Calu3 (cell line): ENCODE measurements at regions of chr10 and their contacts with region 1.

Region 1: DNA sequence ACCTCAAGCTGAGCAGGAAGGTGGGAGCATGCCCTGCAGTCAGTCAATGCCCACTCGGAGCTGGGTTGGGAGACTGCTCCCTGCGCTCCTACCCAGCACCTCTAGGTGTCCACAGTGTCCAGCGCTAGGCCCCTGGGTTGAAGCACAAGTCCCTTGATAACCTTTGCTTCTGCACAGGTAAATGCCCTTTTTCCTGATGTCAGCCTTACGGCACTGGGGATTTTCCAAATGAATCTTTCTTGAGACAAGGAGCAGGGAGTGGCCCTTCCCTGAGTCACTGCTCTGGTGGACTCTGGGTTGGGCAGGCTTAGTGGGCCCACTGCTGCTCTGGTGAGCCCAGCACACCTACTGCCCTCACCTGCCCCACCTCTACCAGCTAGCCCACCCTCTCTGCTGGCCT is 61.9 kb upstream of the OPN4 start:
- DNase-seq: peak; percentile 38
- H3K4me3 Mint-ChIP-seq: no peak overlapping the region
- H3K27ac Mint-ChIP-seq: no peak overlapping the region
- H3K4me1 Mint-ChIP-seq: peaks cover 9% of the 10 kb centered on the region
- H3K27me3 Mint-ChIP-seq: no peaks in the 10 kb centered on the region
- CTCF ChIP-seq: no peak

Region 2: GRCh38 chr10:86603256-86603655 is 10.8 kb after region 1 on chr10:
- CTCF ChIA-PET with region 1: no interaction called
- intact Hi-C with region 1: no loop called
- DNase-seq: no peak
- H3K4me3 Mint-ChIP-seq: no peak overlapping the region
- H3K27ac Mint-ChIP-seq: no peak overlapping the region
- H3K4me1 Mint-ChIP-seq: peaks cover 15% of the 10 kb centered on the region
- H3K27me3 Mint-ChIP-seq: peaks cover 14% of the 10 kb centered on the region
- CTCF ChIP-seq: no peak

Region 3: DNA sequence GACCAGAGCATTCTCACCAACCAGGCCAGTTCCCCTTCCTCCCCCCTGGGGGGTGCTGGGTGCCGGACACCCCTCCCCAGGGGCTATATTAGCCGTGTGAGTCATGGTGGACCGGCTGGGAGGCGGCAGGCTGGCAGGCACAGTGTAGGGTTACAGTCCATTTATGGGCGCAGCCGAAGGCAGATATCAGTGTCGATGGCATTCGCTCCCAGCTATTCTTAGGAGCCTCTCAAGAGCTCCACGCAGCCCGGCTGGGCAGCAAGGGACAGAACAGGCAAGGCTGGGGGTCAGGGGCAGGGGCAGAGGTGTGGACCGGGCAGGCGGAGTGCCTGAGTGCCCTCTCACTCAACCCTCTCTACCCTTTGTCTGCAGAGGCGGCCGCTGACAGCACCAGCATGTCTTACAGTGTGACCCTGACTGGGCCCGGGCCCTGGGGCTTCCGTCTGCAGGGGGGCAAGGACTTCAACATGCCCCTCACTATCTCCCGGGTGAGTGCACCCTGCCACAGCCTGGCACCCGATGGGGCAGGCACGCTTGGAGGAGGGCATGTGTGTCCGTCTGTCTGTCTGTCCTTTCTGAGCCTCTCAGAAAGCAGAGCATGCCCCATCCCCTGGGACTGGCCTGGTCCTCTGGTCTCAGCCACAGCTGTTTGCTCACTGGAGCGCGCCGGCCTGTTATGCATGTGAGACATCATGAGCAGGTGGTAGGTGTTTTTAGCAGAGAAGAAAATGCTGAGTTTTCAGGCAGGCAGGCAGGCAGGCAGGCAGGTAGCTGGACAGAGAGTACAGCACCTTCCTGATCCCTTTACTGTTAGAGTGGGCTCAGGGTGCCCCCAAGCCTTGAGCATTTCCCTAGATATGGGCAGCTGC is 76.1 kb after region 1 on chr10 and contains the start of gene LDB3:
- CTCF ChIA-PET with region 1: no interaction called
- intact Hi-C with region 1: loop called (anchors 5 kb)
- DNase-seq: peak; percentile 49
- H3K4me3 Mint-ChIP-seq: no peak within 1 kb of the TSS
- H3K27ac Mint-ChIP-seq: no peak within 1 kb of the TSS
- H3K4me1 Mint-ChIP-seq: peaks cover 14% of the 10 kb centered on the region
- H3K27me3 Mint-ChIP-seq: peaks cover 12% of the 10 kb centered on the region
- CTCF ChIP-seq: no peak
- total RNA-seq, gene LDB3: not detected in 2 replicates

Region 4: GRCh38 chr10:86688398-86688921 is 96.0 kb after region 1 on chr10:
- CTCF ChIA-PET with region 1: no interaction called
- intact Hi-C with region 1: loop called (anchors 2 kb)
- DNase-seq: peak; percentile 49
- H3K4me3 Mint-ChIP-seq: no peak overlapping the region
- H3K27ac Mint-ChIP-seq: no peak overlapping the region
- H3K4me1 Mint-ChIP-seq: no peaks in the 10 kb centered on the region
- H3K27me3 Mint-ChIP-seq: peaks cover 42% of the 10 kb centered on the region
- CTCF ChIP-seq: peak; percentile 67